SK-N-SH (cell line): ENCODE measurements at regions of chr12 and their contacts with region 1.

Region 1: GRCh38 chr12:113965951-113966797 is at the start of gene RBM19:
- DNase-seq: peak; percentile 95
- H3K4me3 ChIP-seq: peak within 1 kb of the TSS; percentile 80 to 93
- H3K27ac ChIP-seq: peak within 1 kb of the TSS; percentile 23 to 39; a peak in 2 of 4 replicates
- H3K4me1 ChIP-seq: peaks cover 0 to 9% of the 10 kb centered on the region in 2 experiments; a peak in 3 of 4 replicates
- H3K27me3 ChIP-seq: peaks cover 17% of the 10 kb centered on the region; the same call in 1 of the 2 replicates
- CTCF ChIP-seq: peak; percentile 93
- EP300 ChIP-seq: no peak
- RAD21 ChIP-seq: peak; percentile 55
- polyA plus RNA-seq, gene RBM19: 16.6 and 20.3 TPM in 2 replicates

Region 2: DNA sequence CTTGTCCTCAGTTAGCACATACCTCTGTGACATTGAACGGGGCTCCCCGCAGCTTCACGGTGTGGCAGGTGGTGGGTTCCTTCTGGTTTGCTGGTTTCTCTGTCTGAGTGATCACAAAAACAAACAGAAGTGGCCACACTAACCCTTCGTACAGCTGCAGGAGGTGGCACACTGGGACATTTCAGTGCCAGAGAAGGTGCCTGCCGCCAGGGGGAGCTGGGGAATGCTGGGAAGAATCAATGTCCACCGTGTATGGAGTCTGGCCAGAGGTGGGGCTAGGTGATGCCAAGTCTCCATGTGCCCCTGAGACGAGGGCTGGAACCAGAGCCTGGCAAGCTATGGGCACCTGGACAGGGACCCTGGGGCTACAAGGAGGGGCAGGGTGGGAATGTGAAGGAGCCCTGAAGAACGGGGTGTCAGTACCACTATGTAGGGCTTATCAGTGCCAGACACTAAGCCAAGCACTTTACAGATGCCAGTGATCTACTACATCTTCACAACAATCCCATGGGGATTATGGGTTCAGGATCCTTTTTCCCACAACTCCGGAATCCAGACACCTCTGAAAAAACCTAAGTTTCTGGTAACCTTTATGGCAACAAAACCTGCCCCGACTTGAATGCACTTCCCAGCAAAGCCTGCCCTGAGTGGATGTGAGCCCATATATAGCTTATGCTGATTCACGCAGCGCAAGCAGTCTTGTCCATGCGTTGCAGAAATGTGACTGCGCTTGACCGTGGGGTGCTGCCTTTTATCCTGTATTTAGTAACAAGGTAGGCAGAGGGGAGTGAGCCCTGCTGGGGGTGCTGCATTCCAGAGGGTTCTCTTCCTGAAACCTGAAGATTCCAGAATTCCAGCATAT is 10.8 kb before region 1 on chr12:
- CTCF ChIA-PET with region 1: interaction called, 10 read pairs
- POLR2A ChIA-PET with region 1: interaction called, 3 read pairs
- DNase-seq: peak; percentile 49
- H3K4me3 ChIP-seq: no peak overlapping the region
- H3K27ac ChIP-seq: no peak overlapping the region
- H3K4me1 ChIP-seq: no peaks in the 10 kb centered on the region
- H3K27me3 ChIP-seq: no peaks in the 10 kb centered on the region
- CTCF ChIP-seq: peak; percentile 63
- EP300 ChIP-seq: no peak
- RAD21 ChIP-seq: no peak

Region 3: GRCh38 chr12:114054982-114055381 is 88.8 kb after region 1 on chr12:
- CTCF ChIA-PET with region 1: no interaction called
- POLR2A ChIA-PET with region 1: no interaction called
- DNase-seq: no peak
- H3K4me3 ChIP-seq: no peak overlapping the region
- H3K27ac ChIP-seq: no peak overlapping the region
- H3K4me1 ChIP-seq: no peaks in the 10 kb centered on the region
- H3K27me3 ChIP-seq: no peaks in the 10 kb centered on the region; the same call in 1 of the 2 replicates
- CTCF ChIP-seq: no peak
- EP300 ChIP-seq: no peak
- RAD21 ChIP-seq: no peak